SK-N-SH (cell line): ENCODE measurements at regions of chr7 and their contacts with region 1.

Region 1: GRCh38 chr7:43834463-43835251 is 34.7 kb downstream of the MRPS24 start:
- DNase-seq: no peak
- H3K4me3 ChIP-seq: no peak overlapping the region
- H3K27ac ChIP-seq: no peak overlapping the region
- H3K4me1 ChIP-seq: no peaks in the 10 kb centered on the region; a peak in 1 of 4 replicates
- H3K27me3 ChIP-seq: no peaks in the 10 kb centered on the region; the same call in 1 of the 2 replicates
- CTCF ChIP-seq: no peak
- EP300 ChIP-seq: no peak
- RAD21 ChIP-seq: no peak

Region 2: GRCh38 chr7:42940985-42941847 is 893.4 kb before region 1 on chr7:
- CTCF ChIA-PET with region 1: interaction called, 19 read pairs
- POLR2A ChIA-PET with region 1: no interaction called
- DNase-seq: peak; percentile 62
- H3K4me3 ChIP-seq: no peak overlapping the region
- H3K27ac ChIP-seq: no peak overlapping the region
- H3K4me1 ChIP-seq: peaks cover 0 to 3% of the 10 kb centered on the region in 2 experiments; a peak in 1 of 4 replicates
- H3K27me3 ChIP-seq: no peaks in the 10 kb centered on the region
- CTCF ChIP-seq: peak; percentile 99
- EP300 ChIP-seq: no peak
- RAD21 ChIP-seq: peak; percentile 94

Region 3: GRCh38 chr7:43625453-43625852 is 209.2 kb before region 1 on chr7:
- CTCF ChIA-PET with region 1: interaction called, 10 read pairs
- POLR2A ChIA-PET with region 1: no interaction called
- DNase-seq: no peak
- H3K4me3 ChIP-seq: no peak overlapping the region
- H3K27ac ChIP-seq: peak overlapping the region; percentile 47 to 58; a peak in 3 of 4 replicates
- H3K4me1 ChIP-seq: peaks cover 8 to 35% of the 10 kb centered on the region in 2 experiments; a peak in 3 of 4 replicates
- H3K27me3 ChIP-seq: no peaks in the 10 kb centered on the region
- CTCF ChIP-seq: no peak
- EP300 ChIP-seq: no peak
- RAD21 ChIP-seq: no peak

Region 4: DNA sequence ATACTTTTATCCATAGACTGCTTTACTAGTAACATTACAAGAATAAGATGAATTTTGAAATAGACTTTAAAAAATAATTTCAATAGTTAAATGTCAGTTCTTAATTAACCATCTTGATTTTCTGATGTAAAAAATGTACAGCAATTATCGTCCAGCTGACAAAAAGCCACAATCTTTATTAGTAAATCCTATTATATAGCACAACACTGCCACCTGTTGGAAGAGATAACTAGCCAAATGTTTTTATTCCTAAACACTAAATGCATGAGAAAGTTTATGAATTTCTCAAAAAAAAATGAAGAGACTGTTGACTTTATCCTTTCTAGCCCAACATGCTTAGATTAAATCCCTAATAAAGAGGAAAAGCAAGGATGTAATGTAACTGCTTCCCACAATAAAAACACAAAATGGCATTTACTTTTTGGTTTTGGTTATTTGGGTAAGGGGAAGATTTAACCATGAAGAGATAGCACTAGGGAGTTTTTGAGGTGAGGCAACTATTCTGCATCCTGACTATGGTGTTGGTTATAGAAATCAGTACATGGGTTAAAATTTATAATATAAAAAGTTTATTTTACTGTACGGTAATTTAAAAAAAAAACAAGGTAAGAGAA is 113.4 kb before region 1 on chr7:
- CTCF ChIA-PET with region 1: interaction called, 43 read pairs
- POLR2A ChIA-PET with region 1: no interaction called
- DNase-seq: peak; percentile 45
- H3K4me3 ChIP-seq: no peak overlapping the region; a peak in 1 of 4 replicates
- H3K27ac ChIP-seq: no peak overlapping the region; a peak in 1 of 4 replicates
- H3K4me1 ChIP-seq: no peaks in the 10 kb centered on the region; a peak in 1 of 4 replicates
- H3K27me3 ChIP-seq: no peaks in the 10 kb centered on the region
- CTCF ChIP-seq: peak; percentile 99
- EP300 ChIP-seq: no peak
- RAD21 ChIP-seq: peak; percentile 79

Region 5: DNA sequence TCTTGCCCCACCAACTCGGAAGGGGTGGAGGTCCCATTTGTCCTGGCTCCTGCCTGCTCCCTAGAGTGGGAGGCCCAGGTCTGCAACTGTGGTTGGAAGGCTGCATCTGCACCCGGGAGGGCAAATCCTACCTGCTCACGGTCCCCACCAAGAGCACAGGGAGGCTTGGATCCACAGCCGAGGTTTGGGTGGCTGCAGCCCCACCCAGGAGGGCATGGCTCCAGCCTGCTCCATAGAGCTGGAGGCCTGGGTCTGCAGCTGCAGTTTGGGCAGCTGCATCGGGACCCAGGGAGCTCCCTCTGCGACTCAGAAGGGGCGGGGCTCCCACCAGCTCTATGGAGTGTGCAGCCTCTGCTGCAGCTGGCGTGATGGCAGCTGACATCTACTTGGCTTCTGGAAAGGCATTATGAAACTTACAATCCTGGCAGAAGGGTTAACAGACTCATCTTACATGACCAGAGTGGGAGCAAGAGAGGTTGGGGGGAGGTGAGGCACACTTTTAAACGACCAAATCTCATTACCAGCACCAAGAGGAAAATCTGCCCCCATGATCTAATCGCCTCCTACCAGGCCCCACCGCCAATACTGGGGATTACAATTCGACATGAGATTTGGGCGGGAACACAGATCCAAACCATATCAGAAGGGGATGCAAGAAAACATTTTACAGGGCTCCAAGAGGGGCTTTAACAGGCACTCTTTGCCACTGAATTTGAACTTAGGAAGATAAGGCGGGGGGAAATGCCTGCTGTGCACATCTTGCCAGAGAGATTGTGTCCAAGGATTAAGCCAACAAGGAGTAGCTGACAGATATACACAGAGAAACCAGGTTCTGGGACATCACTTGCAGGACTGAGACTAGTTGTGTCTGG is 84.4 kb before region 1 on chr7:
- CTCF ChIA-PET with region 1: interaction called, 10 read pairs
- POLR2A ChIA-PET with region 1: no interaction called
- DNase-seq: no peak
- H3K4me3 ChIP-seq: no peak overlapping the region
- H3K27ac ChIP-seq: no peak overlapping the region
- H3K4me1 ChIP-seq: peaks cover 0 to 3% of the 10 kb centered on the region in 2 experiments; a peak in 1 of 4 replicates
- H3K27me3 ChIP-seq: peaks cover 11% of the 10 kb centered on the region; the same call in 1 of the 2 replicates
- CTCF ChIP-seq: no peak
- EP300 ChIP-seq: no peak
- RAD21 ChIP-seq: no peak

Region 6: GRCh38 chr7:43799589-43799988 is 35.1 kb before region 1 on chr7:
- CTCF ChIA-PET with region 1: interaction called, 29 read pairs
- POLR2A ChIA-PET with region 1: no interaction called
- DNase-seq: no peak
- H3K4me3 ChIP-seq: no peak overlapping the region
- H3K27ac ChIP-seq: no peak overlapping the region
- H3K4me1 ChIP-seq: no peaks in the 10 kb centered on the region
- H3K27me3 ChIP-seq: no peaks in the 10 kb centered on the region
- CTCF ChIP-seq: peak; percentile 11; the same call in 1 of the 2 replicates
- EP300 ChIP-seq: no peak
- RAD21 ChIP-seq: no peak; the same call in 1 of the 2 replicates

Region 7: DNA sequence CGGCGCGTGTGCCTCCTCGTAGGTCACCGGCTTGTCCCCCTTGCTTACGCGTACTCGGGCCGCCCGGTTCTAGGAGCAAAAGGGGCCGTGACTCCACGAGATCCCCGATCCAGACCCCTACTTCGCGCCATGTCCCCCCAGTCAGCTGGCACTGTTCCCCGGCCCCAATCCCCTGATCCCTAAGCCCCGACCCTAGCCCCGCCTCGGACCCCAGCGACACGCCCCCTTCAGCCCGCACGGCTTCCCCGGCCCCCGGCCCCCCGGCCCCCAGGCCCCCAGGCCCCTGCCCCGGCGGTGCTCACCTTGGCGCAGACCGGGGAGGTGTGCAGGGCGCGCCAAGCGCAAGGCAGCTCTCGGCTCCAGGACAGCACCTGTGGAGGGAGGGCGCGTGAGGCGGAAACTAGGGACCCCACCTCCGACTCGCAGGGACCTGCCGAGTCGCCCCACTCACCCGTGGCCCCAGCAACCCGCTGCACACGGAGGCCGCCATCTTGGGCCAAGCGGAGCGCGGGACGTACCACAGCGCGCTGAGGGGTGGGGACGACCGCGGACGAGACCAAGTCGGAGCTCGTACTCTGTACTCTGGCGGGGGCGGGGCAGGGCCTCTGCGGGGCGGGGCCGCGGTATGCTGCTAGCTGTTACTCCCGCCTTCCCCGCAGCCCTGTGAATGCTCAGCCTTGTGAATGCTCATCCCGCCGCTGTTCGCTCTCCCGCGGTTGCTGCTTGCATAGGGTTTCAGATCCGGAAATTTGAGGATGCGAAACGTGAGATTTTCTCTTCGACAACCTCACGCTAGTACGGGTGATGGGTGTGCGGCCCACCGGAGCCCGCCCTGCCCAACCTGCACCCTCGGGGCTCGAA is 34.6 kb after region 1 on chr7 and contains the start of gene MRPS24:
- CTCF ChIA-PET with region 1: interaction called, 49 read pairs
- POLR2A ChIA-PET with region 1: no interaction called
- DNase-seq: peak; percentile 100
- H3K4me3 ChIP-seq: peak within 1 kb of the TSS; percentile 86 to 91
- H3K27ac ChIP-seq: peak within 1 kb of the TSS; percentile 91 to 93
- H3K4me1 ChIP-seq: peaks cover 14 to 26% of the 10 kb centered on the region in 2 experiments
- H3K27me3 ChIP-seq: no peaks in the 10 kb centered on the region
- CTCF ChIP-seq: no peak
- EP300 ChIP-seq: peak in 1 of 2 experiments; percentile 61; a peak in 1 of 4 replicates
- RAD21 ChIP-seq: 0 out of 2 replicates have a peak, but pooled peaks have one; percentile 15
- polyA plus RNA-seq, gene MRPS24: 234 and 235 TPM in 2 replicates

Region 8: DNA sequence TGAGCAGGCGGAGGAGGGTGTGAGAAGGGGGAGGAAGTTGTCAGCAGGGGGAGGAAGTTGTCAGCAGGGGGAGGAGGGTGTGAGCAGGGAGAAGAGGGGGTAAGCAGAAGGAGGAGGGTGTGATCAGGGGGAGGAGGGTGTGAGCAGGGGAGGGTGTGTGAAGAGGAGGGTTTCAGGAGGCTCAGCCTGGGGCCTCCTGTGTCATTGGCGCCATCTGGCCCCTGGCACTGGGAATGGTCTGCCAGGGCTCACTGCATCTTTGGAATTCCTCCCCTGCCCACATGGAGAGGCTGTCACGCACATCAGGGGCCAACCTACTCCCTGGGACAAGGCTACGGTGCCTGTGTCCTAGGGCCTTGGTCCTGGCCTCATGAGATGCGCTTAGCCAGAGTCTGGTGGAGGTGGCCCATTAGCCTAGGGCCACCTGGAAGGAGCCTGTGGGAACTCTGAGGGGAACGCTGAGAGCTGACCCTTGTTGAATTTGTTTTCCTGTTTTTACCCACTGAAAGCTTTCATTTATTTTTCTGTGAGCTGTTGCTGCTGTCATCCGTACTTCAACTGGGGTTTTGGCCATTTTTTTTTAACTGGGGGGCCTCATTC is 472.7 kb after region 1 on chr7:
- CTCF ChIA-PET with region 1: no interaction called
- POLR2A ChIA-PET with region 1: no interaction called
- DNase-seq: peak; percentile 87
- H3K4me3 ChIP-seq: no peak overlapping the region
- H3K27ac ChIP-seq: no peak overlapping the region
- H3K4me1 ChIP-seq: peaks cover 0 to 4% of the 10 kb centered on the region in 2 experiments; a peak in 1 of 4 replicates
- H3K27me3 ChIP-seq: no peaks in the 10 kb centered on the region
- CTCF ChIP-seq: peak; percentile 56
- EP300 ChIP-seq: no peak
- RAD21 ChIP-seq: peak; percentile 89